Heart left ventricle (tissue), 16 donors: ENCODE measurements at regions of chr12 and their contacts with region 1.

Region 1: DNA sequence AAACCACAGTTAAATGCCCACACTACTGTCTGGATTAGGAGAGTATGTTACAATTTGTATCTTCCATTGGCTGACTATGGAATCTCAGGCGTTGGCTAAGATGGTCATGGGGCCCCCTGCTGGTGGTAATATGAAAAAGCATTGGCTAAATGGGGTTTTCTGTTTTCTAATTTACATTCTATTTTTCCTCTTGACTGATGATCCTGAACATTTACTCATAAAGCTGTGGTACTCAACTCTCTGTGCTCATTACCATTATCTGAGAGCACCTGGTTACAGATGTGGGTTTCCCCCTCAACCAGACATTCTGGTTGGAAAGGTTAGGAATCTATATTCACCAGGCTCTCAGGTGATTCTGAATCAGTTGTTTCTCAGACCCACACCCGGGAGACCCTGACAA is 64.8 kb downstream of the WSCD2 start:
- DNase-seq: no peak
- ATAC-seq: peak in 1 of 4 donors; percentile 23
- H3K4me3 ChIP-seq: no peak overlapping the region
- H3K27ac ChIP-seq: no peak overlapping the region
- H3K4me1 ChIP-seq: peaks cover 0 to 10% (median 0%) of the 10 kb centered on the region in 12 donors
- H3K27me3 ChIP-seq: peaks cover 0 to 6% (median 0%) of the 10 kb centered on the region in 9 donors
- CTCF ChIP-seq: peak; percentile 56 to 77 (median 70)
- POLR2A ChIP-seq: no peak

Region 2: DNA sequence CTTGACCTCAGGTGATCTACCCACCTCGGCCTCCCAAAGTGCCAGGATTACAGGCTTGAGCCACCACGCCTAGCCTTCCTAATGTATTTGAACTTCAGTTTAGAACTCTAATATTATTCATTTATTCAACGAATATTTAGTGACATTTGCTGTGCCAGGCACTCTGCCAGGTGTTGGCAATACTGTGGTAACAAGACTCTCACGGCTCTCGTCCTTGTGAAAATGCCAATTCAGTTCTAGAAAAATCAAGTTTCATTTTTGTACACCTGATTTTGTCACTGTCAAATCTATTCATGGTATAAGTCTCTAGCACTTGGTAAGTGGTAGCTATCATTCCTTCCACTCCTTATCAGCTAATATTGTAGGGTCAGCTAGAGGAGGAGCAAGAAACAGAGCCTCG is 514.6 kb before region 1 on chr12:
- intact Hi-C with region 1: loop called in 1 of 10 experiments (anchors 5 kb)
- DNase-seq: no peak
- ATAC-seq: no peak
- H3K4me3 ChIP-seq: no peak overlapping the region
- H3K27ac ChIP-seq: no peak overlapping the region
- H3K4me1 ChIP-seq: peaks cover 0 to under 1% (median 0%) of the 10 kb centered on the region in 12 donors
- H3K27me3 ChIP-seq: peaks cover 0 to 29% (median 9%) of the 10 kb centered on the region in 9 donors
- CTCF ChIP-seq: no peak
- POLR2A ChIP-seq: no peak

Region 3: DNA sequence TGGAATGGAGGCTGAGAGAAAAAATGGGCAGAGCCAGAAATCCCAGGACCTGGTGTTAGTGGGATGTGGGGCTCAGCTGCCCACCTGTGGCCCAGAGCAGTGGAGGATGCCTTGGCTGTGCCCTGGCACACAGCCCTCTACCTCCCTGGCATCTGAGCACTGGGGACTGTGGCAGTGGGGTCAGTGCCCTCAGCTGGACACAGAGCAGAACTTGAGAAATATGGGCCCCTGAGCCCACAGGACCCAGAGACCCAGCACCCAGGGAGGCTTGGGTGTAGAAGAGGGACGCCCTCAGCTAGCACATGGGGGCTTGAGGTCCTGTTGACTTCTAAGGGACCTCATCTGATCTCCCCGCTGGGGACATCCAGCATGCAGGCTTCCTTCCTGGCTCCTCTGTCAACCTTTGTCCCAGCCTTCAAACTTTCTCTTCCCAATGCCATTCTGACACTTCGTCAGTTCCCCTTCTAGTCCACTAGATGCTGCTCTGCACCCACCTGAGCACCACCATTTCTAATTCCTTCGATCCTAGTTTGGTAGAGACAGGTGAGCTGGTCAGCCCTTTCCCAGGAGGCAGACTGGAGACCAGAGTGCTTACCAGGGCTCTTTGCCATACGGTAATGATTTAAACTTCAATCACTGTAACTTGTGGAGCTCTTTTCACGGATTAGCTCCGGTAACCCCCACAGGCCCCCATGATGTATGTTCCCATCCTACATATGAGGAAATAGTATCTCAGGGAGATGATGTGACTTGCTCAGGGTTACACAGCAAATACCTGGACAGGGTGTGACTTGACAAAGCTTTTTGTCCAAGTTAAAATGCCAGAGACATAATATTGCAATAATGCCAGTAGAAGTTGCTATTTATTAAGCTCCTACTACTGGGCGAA is 275.8 kb before region 1 on chr12:
- intact Hi-C with region 1: loop called in 2 of 10 experiments (anchors 5 kb)
- DNase-seq: no peak
- ATAC-seq: peak in 3 of 4 donors; percentile 28 to 48 (median 47)
- H3K4me3 ChIP-seq: no peak overlapping the region
- H3K27ac ChIP-seq: no peak overlapping the region
- H3K4me1 ChIP-seq: no peaks in the 10 kb centered on the region
- H3K27me3 ChIP-seq: peaks cover 0 to 57% (median 4%) of the 10 kb centered on the region in 9 donors
- CTCF ChIP-seq: peak; percentile 14 to 63 (median 49)
- POLR2A ChIP-seq: no peak

Region 4: DNA sequence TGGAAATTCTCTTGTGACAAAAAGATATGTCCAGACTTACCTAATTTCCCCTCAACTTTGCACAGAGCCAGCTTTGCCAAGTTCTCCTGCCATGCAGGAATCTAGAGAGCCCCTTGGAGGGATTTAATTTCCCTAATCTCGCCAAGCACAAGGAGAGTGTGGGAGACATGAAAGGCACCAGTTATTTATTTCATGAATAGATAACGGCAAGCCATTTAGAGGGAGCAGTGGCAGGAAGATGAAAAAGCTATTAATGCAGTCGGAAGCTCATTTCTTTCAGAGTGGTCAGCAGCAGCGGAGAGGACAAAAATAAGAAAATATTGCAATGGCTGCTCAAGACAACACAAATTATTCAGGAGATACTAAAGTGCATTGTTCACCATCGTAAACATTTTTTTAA is 215.7 kb before region 1 on chr12:
- intact Hi-C with region 1: no loop called
- DNase-seq: no peak
- ATAC-seq: no peak
- H3K4me3 ChIP-seq: no peak overlapping the region
- H3K27ac ChIP-seq: no peak overlapping the region
- H3K4me1 ChIP-seq: no peaks in the 10 kb centered on the region
- H3K27me3 ChIP-seq: peaks cover 0 to 36% (median 0%) of the 10 kb centered on the region in 9 donors
- CTCF ChIP-seq: no peak
- POLR2A ChIP-seq: no peak

Region 5: GRCh38 chr12:108099073-108099472 is 94.8 kb before region 1 on chr12:
- intact Hi-C with region 1: loop called in 2 of 10 experiments (anchors 2 to 10 kb)
- DNase-seq: no peak
- ATAC-seq: no peak
- H3K4me3 ChIP-seq: no peak overlapping the region
- H3K27ac ChIP-seq: no peak overlapping the region
- H3K4me1 ChIP-seq: no peaks in the 10 kb centered on the region
- H3K27me3 ChIP-seq: peaks cover 0 to 36% (median 5%) of the 10 kb centered on the region in 9 donors
- CTCF ChIP-seq: peak in 9 of 12 donors; percentile 16 to 46 (median 41)
- POLR2A ChIP-seq: no peak

Region 6: GRCh38 chr12:108129017-108129812 is 64.7 kb before region 1 on chr12 and contains the start of gene WSCD2:
- intact Hi-C with region 1: loop called in 4 of 10 experiments (anchors 1 to 5 kb)
- DNase-seq: peak in 3 of 5 donors; percentile 29 to 63 (median 48)
- ATAC-seq: peak in 3 of 4 donors; percentile 49 to 70 (median 52)
- H3K4me3 ChIP-seq: peak within 1 kb of the TSS in 11 of 12 donors; percentile 18 to 58 (median 40)
- H3K27ac ChIP-seq: peak within 1 kb of the TSS in 2 of 12 donors; percentile 5 to 71
- H3K4me1 ChIP-seq: peaks cover 0 to 24% (median 2%) of the 10 kb centered on the region in 12 donors
- H3K27me3 ChIP-seq: peaks cover 0 to 76% (median 37%) of the 10 kb centered on the region in 9 donors
- CTCF ChIP-seq: peak in 7 of 12 donors; percentile 6 to 40 (median 20)
- POLR2A ChIP-seq: no peak
- total RNA-seq, gene WSCD2: 0.07 to 2.5 (median 0.49) TPM in 8 of 9 donors, not detected in the other

Region 7: DNA sequence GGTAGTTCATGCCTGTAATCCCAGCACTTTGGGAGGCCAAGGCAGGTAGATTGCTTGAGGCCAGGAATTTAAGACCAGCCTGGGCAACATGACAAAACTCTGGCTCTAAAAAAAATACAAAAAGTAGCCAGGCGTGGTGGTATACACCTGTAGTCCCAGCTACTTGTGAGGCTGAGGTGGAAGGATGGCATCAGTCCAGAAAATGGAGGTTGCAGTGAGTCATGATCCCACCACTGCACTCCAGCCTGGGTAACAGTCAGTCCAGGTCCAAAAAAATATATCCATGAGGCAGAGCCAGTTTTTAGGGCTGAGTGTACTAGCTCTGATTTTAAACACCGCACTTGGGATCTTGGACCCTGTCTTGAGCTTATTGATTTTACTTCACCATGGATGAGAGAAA is 290.5 kb after region 1 on chr12:
- intact Hi-C with region 1: no loop called
- DNase-seq: no peak
- ATAC-seq: no peak
- H3K4me3 ChIP-seq: no peak overlapping the region
- H3K27ac ChIP-seq: no peak overlapping the region
- H3K4me1 ChIP-seq: no peaks in the 10 kb centered on the region
- H3K27me3 ChIP-seq: peaks cover 0 to 24% (median 6%) of the 10 kb centered on the region in 9 donors
- CTCF ChIP-seq: no peak
- POLR2A ChIP-seq: no peak